Upper lobe of right lung (tissue), 1 donor: ENCODE measurements at regions of chr17 and their contacts with region 1.

Region 1: GRCh38 chr17:42937712-42938596 is 26.3 kb downstream of the AARSD1 start:
- DNase-seq: no peak
- ATAC-seq: peak; percentile 78
- H3K4me3 ChIP-seq: no peak overlapping the region
- H3K27ac ChIP-seq: no peak overlapping the region
- H3K4me1 ChIP-seq: no peaks in the 10 kb centered on the region
- H3K27me3 ChIP-seq: peaks cover 4% of the 10 kb centered on the region
- CTCF ChIP-seq: peak; percentile 61

Region 2: GRCh38 chr17:42843358-42843934 is 94.5 kb before region 1 on chr17:
- intact Hi-C with region 1: loop called (anchors 5 kb)
- DNase-seq: no peak
- ATAC-seq: peak; percentile 75
- H3K4me3 ChIP-seq: no peak overlapping the region
- H3K27ac ChIP-seq: peak overlapping the region; percentile 44
- H3K4me1 ChIP-seq: peaks cover 20% of the 10 kb centered on the region
- H3K27me3 ChIP-seq: no peaks in the 10 kb centered on the region
- CTCF ChIP-seq: peak; percentile 92

Region 3: DNA sequence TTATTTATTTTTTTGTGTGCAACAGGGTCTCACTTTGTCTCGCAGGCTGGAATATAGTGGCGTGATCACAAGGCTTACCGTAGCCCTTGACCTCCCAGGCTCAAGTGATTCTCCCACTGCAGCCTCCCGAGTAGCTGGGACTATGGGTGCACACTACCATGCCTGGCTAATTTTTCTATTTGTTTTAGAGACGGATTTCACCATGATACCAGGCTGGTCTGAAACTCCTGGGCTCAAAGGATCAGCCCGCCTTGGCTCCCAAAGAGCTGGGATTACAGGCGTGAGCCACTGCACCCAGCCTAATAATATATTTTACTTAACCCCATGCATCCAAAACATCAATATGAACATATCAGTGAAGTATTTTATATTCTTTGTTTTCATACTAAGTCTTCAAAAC is 288.4 kb after region 1 on chr17:
- intact Hi-C with region 1: no loop called
- DNase-seq: peak; percentile 30
- ATAC-seq: no peak
- H3K4me3 ChIP-seq: no peak overlapping the region
- H3K27ac ChIP-seq: no peak overlapping the region
- H3K4me1 ChIP-seq: no peaks in the 10 kb centered on the region
- H3K27me3 ChIP-seq: no peaks in the 10 kb centered on the region
- CTCF ChIP-seq: no peak